ENCODE measurements at regions of chr17 and their contacts with region 1.

Region 1: DNA sequence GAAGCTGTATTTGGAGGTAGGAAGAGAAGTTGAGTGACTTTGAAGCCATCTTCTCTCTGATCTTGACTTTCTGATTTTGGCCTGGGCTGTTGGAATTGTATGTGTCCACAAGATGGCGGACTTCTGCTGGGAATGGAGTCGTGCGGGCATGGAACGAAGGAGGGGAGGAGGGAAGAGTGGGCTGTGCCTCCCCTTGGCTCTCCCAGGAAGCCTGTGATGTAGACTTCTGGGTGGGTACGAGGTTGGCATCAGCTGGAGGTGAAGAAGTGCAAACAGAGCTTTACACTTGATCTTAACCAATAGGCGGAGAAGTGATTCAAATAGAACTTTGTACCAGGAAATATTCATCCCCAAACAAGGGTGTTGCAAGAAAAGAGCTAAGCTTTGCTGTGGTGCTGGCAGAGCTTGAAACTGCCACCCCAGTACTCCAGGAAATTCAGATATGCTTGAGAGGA is 7.4 kb upstream of the TMEM220 start:
- H3K4me3 ChIP-seq: no peak overlapping the region
- H3K27ac ChIP-seq: no peak overlapping the region
- H3K4me1 ChIP-seq: no peaks in the 10 kb centered on the region
- CTCF ChIP-seq: peak; percentile 85

Region 2: DNA sequence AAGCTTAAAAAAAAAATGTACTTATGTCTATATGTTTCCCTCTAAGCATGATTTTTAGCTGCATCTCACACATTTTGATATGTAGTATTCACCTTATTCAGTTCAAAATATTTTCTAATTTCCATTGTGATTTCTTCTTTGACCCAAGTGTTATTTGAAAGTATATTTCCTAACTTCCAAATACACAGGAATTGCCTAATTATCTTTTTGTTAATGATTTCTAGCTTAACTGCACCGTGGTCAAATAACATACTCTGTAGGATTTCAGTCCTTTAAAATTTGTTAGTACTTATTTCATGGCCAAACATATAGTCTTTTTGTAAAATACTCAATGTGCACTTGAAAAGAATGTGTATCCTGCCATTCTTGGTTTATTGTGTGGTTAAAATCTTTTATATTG is 18.6 kb before region 1 on chr17:
- CTCF ChIA-PET with region 1: interaction called, 22 read pairs
- POLR2A ChIA-PET with region 1: no interaction called
- H3K4me3 ChIP-seq: no peak overlapping the region
- H3K27ac ChIP-seq: no peak overlapping the region
- H3K4me1 ChIP-seq: no peaks in the 10 kb centered on the region
- CTCF ChIP-seq: no peak

Region 3: DNA sequence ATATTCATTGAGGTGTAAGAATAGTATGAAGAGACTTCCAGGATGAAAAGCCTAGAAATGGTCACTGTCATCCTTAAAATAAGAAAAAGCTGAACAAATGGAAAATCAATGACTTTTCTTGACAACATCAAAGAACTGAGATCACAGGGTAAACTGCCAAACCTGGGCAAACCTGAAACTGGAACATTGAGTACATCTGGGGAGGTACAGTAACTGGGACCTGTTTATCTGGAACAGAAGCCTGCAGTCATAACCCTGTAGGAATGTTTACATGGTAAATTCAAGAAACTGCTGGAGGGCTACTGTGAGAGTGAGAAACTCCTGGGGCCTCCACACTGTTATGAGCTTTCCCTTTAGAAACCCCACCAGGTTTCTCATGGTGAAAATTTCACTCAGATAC is 230.8 kb after region 1 on chr17:
- CTCF ChIA-PET with region 1: no interaction called
- POLR2A ChIA-PET with region 1: no interaction called
- H3K4me3 ChIP-seq: no peak overlapping the region
- H3K27ac ChIP-seq: no peak overlapping the region
- H3K4me1 ChIP-seq: no peaks in the 10 kb centered on the region
- CTCF ChIP-seq: no peak

Region 4: DNA sequence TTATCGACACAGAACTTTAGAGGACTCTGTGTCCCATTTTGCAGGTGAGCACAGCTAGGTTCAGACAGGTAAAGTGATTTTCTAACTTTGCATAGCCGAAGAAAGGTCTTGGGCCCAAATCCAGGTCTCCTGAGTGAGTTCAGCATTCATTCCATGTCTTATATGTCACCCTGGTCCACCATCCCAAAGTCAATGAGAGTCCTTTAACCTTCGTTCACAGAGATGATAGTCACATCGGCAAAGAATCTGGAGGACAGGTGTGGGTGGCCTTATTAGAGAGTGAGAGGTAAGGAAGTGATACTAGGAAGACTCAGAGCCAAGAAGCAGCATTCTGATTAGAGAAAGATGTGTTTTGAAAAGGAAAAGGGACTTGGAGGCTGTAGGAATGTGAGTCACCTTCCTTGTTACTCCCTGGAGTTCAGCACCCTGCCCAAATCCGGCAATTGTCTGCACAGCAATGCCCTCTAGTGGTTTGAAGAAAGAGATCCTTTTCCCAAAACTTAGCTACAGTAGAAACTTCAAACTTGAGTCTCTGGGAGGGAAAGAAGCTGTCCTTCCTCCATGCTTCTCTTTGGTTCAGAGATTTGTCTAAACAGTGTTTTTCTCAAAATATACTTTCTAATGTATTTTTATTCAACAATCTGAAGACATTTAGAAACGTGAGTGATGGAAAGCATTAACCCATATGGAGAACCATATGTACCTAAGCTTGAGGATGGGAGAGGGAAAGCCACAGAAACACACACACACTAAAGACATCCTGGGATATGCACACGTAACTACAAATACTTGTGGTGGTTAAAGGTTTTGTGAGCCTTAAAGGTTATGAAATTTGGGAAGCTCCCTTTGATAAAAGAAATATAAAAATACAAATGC is 407.4 kb after region 1 on chr17:
- CTCF ChIA-PET with region 1: interaction called, 20 read pairs
- POLR2A ChIA-PET with region 1: no interaction called
- H3K4me3 ChIP-seq: no peak overlapping the region
- H3K27ac ChIP-seq: no peak overlapping the region
- H3K4me1 ChIP-seq: no peaks in the 10 kb centered on the region
- CTCF ChIP-seq: peak; percentile 30; the same call in 1 of the 2 replicates

Measured in HEK293 (cell line).